ENCODE measurements at regions of chr11 and their contacts with region 1.

Region 1: GRCh38 chr11:124865921-124866583 is 820 bp downstream of the ROBO3 start:
- DNase-seq: no peak
- H3K4me3 ChIP-seq: peak overlapping the region; percentile 31
- H3K27ac ChIP-seq: no peak overlapping the region
- H3K27me3 ChIP-seq: peaks cover 97% of the 10 kb centered on the region
- CTCF ChIP-seq: peak; percentile 73

Region 2: DNA sequence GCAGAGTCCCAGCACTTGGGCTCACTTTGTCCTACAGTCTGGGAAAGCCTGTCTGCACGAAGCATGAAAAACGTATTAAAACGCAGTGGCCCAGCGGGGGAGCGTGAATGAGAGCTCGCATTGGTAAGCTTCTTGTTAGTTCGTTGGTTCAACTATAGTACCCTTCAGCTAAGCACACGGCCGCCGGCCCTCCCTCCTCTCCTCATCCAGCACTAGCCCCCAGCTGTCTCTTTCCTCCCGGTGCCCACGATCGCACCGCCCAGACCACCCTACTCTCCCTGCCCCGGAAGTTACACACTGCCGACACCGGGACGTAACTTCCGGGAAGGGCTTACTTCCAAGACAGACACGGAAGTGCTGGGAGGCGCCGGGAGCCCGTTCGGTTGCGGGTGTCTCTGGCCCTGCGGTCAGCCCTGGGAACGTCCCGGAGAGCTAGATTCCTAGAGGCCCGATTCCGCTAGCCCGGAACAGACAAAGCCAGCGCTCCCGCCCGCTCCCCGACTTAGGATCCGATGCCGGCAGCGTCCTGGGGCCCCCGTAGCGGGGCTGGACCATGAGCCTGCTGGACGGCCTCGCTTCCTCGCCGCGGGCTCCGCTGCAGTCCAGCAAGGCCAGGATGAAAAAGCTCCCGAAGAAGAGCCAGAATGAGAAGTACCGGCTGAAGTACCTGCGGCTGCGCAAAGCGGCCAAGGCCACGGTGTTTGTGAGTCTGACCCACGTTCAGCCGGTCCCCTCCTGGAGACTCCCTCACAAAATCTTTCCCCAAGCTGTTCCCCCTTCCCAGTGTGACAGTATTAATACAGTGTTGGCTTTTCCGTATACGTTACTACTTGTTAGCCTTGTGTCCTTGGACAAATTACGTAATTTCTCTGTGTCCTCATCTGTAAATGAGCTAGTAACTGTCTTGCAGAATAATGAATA is 243.3 kb before region 1 on chr11 and contains the start of gene TBRG1:
- CTCF ChIA-PET with region 1: interaction called, 10 read pairs
- POLR2A ChIA-PET with region 1: no interaction called
- DNase-seq: peak; percentile 72
- H3K4me3 ChIP-seq: peak within 1 kb of the TSS; percentile 97
- H3K27ac ChIP-seq: peak within 1 kb of the TSS; percentile 94
- H3K27me3 ChIP-seq: peaks cover 12% of the 10 kb centered on the region
- CTCF ChIP-seq: no peak
- polyA plus RNA-seq, gene TBRG1: 30.9 and 31.4 TPM in 2 replicates

Region 3: DNA sequence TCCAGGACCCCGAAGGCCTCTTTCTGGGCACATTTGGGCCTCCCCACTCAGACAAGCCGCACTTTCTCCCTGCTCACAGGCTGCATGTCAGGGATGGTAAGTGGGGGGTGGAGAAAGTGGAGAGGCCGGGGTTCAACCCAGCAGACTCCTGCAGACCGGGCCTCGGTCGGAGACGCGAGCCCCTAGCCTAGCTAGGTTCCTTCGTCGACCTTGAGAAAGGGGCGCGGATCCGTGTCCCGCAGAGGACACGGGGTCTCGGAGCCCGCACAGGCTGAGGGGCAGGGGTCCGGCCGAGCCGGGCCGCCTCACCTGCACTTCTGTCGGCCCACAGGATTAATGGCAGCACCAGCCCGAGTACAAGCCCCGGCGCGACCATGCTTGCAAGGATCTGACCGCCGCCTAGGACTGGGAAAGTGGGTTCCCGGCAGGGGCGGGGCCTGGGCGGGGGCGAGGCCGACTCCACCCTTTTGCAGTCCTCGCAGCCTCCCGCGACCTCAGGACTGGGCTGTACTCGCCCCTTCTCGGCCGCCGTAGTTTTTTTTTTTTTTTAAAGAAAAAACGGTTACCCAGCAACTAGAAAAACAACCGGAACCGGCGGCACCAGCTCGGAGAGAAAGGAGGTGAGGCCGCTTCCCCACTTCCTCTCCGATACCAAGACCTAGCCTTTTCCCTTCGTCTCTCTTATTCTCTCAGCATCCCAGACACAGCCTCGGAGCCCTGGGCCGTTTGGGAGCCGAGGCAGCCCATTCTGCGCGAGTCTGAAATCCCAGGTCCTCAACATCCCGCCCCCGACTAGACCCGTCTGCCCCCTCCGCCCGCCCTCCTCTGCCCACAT is 192.5 kb before region 1 on chr11 and contains the starts of genes SIAE and SPA17:
- CTCF ChIA-PET with region 1: interaction called, 22 read pairs
- POLR2A ChIA-PET with region 1: no interaction called
- DNase-seq: peak; percentile 92
- H3K4me3 ChIP-seq: peak within 1 kb of the TSS; percentile 74
- H3K27ac ChIP-seq: peak within 1 kb of the TSS; percentile 69
- H3K27me3 ChIP-seq: no peaks in the 10 kb centered on the region
- CTCF ChIP-seq: no peak
- polyA plus RNA-seq, gene SIAE: 33.5 and 37.9 TPM in 2 replicates
- polyA plus RNA-seq, gene SPA17: 6.5 and 8.4 TPM in 2 replicates

Region 4: DNA sequence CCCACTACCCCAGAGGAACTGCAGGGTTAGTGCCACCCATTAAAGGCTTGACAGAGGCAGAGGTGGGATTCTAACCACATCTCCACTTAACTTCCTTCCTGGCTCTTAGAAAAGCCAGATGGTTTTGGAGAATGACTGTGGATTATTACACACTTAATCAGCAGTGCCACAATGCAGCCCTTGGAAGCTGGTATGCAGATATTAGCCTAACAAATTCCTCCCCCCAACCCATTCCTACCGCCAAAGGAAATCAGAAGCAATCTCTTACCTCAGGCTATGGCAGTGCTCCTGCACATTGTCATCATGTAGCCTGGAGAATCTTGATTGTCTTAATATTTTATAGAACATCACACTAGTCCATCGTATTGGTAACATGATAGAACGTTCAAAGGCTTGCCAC is 149.5 kb before region 1 on chr11:
- CTCF ChIA-PET with region 1: no interaction called
- POLR2A ChIA-PET with region 1: no interaction called
- DNase-seq: no peak
- H3K4me3 ChIP-seq: no peak overlapping the region
- H3K27ac ChIP-seq: no peak overlapping the region
- H3K27me3 ChIP-seq: peaks cover 37% of the 10 kb centered on the region
- CTCF ChIP-seq: no peak

Region 5: GRCh38 chr11:124846071-124846719 is 19.9 kb before region 1 on chr11:
- CTCF ChIA-PET with region 1: interaction called, 22 read pairs
- POLR2A ChIA-PET with region 1: no interaction called
- DNase-seq: no peak
- H3K4me3 ChIP-seq: no peak overlapping the region
- H3K27ac ChIP-seq: no peak overlapping the region
- H3K27me3 ChIP-seq: peaks cover 93% of the 10 kb centered on the region
- CTCF ChIP-seq: no peak

Region 6: GRCh38 chr11:124953753-124954589 is 87.9 kb after region 1 on chr11 and contains the start of gene CCDC15:
- CTCF ChIA-PET with region 1: interaction called, 14 read pairs
- POLR2A ChIA-PET with region 1: no interaction called
- DNase-seq: peak; percentile 92
- H3K4me3 ChIP-seq: peak within 1 kb of the TSS; percentile 61
- H3K27ac ChIP-seq: peak within 1 kb of the TSS; percentile 87
- H3K27me3 ChIP-seq: no peaks in the 10 kb centered on the region
- CTCF ChIP-seq: no peak
- polyA plus RNA-seq, gene CCDC15: 0.73 and 1.1 TPM in 2 replicates

Measured in AG04450 (cell line).